ENCODE measurements at regions of chr17 and their contacts with region 1.

Region 1: DNA sequence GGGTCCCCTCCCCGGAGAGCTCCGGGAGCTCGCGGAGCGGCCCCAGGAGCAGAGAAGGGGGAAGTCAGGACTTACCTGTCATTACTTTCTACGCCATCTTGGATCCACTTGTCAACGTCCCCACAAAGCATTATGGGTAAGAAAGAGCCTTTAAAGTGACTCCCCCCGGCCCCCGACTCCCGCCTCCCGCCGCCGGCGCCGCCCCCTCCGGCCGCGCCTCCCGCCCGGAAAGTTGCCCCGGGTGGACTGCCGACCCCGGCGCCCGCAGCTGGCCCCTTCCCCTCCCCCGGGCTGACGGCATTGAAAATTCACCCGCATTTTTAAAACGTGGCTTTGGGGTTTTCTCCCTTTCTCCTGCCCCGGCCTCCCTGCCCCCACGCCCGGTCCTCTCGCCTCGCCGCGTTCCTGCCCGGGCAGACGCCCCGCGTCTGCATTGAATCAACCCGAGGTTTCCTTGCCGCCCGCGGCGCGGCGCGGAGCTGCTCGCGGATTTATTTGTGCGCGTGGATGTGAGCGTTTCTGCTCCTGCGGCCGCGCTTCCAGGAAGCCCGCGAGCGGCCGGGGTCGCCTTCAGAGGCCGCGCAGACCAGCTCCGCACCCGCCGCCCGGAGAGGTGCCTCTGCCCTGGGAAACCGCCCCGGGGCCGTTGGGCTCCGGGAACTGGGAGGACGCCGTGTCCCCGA is at the start of gene HELZ:
- DNase-seq: peak; percentile 84
- H3K4me3 Mint-ChIP-seq: peak within 1 kb of the TSS; percentile 85
- H3K27ac Mint-ChIP-seq: peak within 1 kb of the TSS; percentile 91
- H3K4me1 Mint-ChIP-seq: peaks cover 42% of the 10 kb centered on the region
- H3K27me3 Mint-ChIP-seq: no peaks in the 10 kb centered on the region
- CTCF ChIP-seq: no peak
- total RNA-seq, gene HELZ: 56.7 and 71.7 TPM in 2 replicates

Region 2: GRCh38 chr17:67260170-67261011 is 15.2 kb after region 1 on chr17:
- CTCF ChIA-PET with region 1: interaction called, 3 read pairs
- POLR2A ChIA-PET with region 1: interaction called, 15 read pairs
- intact Hi-C with region 1: no loop called
- DNase-seq: peak; percentile 91
- H3K4me3 Mint-ChIP-seq: peak overlapping the region; percentile 51
- H3K27ac Mint-ChIP-seq: peak overlapping the region; percentile 87
- H3K4me1 Mint-ChIP-seq: peaks cover 19% of the 10 kb centered on the region
- H3K27me3 Mint-ChIP-seq: no peaks in the 10 kb centered on the region
- CTCF ChIP-seq: no peak

Region 3: DNA sequence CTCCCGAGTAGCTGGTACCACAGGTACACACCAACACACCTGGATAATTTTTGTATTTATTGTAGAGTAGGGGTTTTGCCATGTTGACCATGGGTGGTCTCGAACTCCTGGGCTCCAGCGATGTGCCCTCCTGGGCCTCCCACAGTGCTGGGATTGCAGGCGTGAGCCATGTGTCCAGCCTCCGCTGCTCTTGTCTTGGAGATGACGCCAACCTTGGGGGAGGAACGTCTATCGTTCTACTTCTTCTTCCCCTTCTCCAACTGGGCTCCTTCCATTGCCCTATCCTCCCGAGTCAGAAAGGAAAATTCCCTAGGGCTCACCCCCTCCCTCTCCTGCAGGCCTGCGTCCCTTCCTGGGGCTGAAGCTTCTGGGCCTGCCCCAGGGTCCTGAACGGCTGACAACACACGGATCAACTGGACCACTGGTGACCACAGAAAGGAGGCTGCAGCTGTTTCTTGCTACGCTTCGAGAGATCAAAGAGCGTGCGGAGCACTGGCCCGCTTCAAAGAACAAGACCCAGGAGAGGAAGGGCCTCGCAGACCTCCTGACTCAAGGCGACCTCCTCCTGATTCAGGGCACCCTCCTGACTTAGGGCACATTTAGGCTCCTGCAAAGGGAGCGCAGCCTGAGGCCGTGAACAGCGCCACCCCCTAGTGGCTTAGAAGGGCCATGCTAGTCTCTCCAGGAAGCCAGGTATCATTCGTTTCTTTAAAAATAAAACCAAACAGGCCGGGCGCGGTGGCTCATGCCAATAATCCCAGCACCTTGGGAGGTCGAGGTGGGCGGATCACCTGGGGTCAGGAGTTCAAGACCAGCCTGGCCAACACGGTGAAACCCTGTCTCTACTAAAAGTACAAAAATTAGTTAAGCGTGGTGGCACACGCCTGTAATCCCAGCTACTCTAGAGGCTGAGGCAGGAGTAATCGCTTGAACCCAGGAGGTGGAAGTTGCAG is 48.3 kb after region 1 on chr17:
- CTCF ChIA-PET with region 1: interaction called, 4 read pairs
- POLR2A ChIA-PET with region 1: interaction called, 8 read pairs
- intact Hi-C with region 1: loop called (anchors 2 kb)
- DNase-seq: peak; percentile 74
- H3K4me3 Mint-ChIP-seq: no peak overlapping the region
- H3K27ac Mint-ChIP-seq: no peak overlapping the region
- H3K4me1 Mint-ChIP-seq: no peaks in the 10 kb centered on the region
- H3K27me3 Mint-ChIP-seq: no peaks in the 10 kb centered on the region
- CTCF ChIP-seq: peak; percentile 73

Region 4: DNA sequence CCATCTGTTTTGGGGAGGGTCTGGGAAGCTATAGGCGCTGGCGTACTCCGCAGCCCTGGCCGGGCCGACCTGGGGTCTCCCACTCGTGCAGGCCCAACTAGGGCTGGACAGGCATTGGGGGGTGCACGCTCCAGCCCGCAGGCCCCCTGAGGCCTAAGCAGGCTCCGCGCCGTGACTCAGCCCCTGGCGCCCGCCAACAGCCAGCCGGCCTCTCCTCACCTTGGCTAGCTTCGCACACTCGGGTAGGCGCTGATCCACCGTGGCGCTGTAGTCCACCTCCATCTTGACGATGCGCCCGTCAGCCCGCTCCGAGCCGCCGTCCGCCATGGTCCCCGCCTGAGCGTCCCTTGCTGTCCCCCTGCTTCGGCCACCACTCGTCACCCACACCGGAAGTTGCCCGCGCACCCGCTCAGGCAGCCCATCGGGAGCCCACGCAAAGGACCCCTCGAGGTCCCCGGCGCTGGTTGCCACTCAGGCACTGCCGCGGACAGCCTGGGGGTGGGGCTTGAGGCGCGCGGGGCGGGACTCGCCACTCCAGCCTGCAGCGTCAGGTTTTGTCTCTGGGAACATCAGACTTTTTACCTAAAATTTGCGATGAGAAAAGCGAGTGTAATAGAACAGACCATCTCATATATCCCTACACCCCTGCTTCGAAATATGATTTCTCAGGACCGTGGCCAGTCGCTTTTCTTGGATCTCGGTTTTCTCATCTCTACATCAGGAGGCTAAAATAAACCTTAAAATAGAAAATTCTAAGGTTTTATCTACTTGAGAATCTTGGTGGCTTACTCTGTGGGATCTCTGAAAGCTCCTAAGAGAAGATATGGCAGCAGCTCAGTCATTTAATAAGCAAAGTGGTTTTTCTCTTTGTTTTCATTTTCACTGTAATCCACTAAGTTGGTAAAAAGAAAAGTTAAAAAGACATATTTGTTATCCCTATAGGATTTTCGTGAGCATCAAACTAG is 121.3 kb after region 1 on chr17 and contains the start of gene PSMD12:
- CTCF ChIA-PET with region 1: interaction called, 4 read pairs
- POLR2A ChIA-PET with region 1: interaction called, 21 read pairs
- intact Hi-C with region 1: loop called (anchors 10 kb)
- DNase-seq: peak; percentile 90
- H3K4me3 Mint-ChIP-seq: peak within 1 kb of the TSS; percentile 90
- H3K27ac Mint-ChIP-seq: peak within 1 kb of the TSS; percentile 74
- H3K4me1 Mint-ChIP-seq: peaks cover 18% of the 10 kb centered on the region
- H3K27me3 Mint-ChIP-seq: no peaks in the 10 kb centered on the region
- CTCF ChIP-seq: no peak
- total RNA-seq, gene PSMD12: 93.1 and 107 TPM in 2 replicates

Measured in MCF 10A (cell line).